Endothelial cell of umbilical vein (primary cell): ENCODE measurements at regions of chr15 and their contacts with region 1.

Region 1: GRCh38 chr15:89575146-89575655 is at the start of gene TICRR:
- DNase-seq: peak; percentile 100
- H3K4me3 ChIP-seq: peak within 1 kb of the TSS; percentile 52 to 84 (median 65)
- H3K27ac ChIP-seq: peak within 1 kb of the TSS; percentile 7
- H3K4me1 ChIP-seq: peaks cover 18% of the 10 kb centered on the region
- H3K27me3 ChIP-seq: peaks cover 6 to 7% of the 10 kb centered on the region in 2 experiments
- CTCF ChIP-seq: no peak
- POLR2A ChIP-seq: no peak
- total RNA-seq, gene TICRR: 19.4 and 20.5 TPM in 2 replicates

Region 2: GRCh38 chr15:88701561-88702095 is 873.6 kb before region 1 on chr15:
- CTCF ChIA-PET with region 1: no interaction called
- POLR2A ChIA-PET with region 1: no interaction called
- dilution Hi-C with region 1: no loop called
- intact Hi-C with region 1: no loop called
- DNase-seq: no peak
- H3K4me3 ChIP-seq: no peak overlapping the region
- H3K27ac ChIP-seq: no peak overlapping the region
- H3K4me1 ChIP-seq: no peaks in the 10 kb centered on the region
- H3K27me3 ChIP-seq: peaks cover 6 to 21% of the 10 kb centered on the region in 2 experiments
- CTCF ChIP-seq: peak in 1 of 2 donors; percentile 17
- POLR2A ChIP-seq: no peak

Region 3: DNA sequence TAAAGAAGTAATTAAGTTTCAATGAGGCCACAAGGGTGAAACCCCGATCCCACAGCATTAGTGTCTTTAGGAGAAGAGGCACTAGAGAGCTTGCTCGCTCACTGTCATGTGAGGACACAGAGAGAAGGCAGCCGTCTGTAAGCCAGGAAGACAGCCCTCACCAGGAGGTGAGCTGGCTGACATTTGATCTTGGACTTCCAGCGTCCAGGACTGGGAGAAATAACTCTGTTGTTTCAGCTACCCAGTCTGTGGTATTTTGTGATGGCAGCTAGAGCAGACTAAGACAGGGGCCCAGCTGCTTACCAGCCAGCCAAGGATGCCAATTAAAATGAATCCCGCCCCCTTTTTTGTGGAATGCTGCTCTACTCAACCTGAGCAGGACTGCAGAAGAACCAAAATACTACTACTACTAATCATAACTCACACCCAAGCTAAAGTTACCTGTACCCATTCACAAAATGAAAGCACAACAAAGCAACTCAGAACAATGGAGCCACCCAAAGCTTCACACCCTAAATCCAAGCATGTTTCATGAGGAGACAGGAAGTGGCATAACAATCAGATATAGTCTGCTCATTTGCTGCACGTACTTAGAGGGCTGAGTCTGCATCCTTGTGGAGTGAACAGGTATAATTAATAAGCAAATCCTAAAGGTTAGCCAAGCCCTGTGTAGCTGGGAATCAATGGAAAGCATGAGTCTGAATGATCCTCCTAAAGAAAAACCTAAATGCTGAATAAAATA is 43.2 kb before region 1 on chr15:
- CTCF ChIA-PET with region 1: no interaction called
- POLR2A ChIA-PET with region 1: interaction called, 11 read pairs
- dilution Hi-C with region 1: no loop called
- intact Hi-C with region 1: no loop called
- DNase-seq: no peak
- H3K4me3 ChIP-seq: no peak overlapping the region
- H3K27ac ChIP-seq: no peak overlapping the region
- H3K4me1 ChIP-seq: no peaks in the 10 kb centered on the region
- H3K27me3 ChIP-seq: no peaks in the 10 kb centered on the region
- CTCF ChIP-seq: no peak
- POLR2A ChIP-seq: no peak